Activated B cell treated with CpG ODN at 0.5 μM for 24 hours (primary cell): ENCODE measurements at regions of chr12 and their contacts with region 1.

Region 1: DNA sequence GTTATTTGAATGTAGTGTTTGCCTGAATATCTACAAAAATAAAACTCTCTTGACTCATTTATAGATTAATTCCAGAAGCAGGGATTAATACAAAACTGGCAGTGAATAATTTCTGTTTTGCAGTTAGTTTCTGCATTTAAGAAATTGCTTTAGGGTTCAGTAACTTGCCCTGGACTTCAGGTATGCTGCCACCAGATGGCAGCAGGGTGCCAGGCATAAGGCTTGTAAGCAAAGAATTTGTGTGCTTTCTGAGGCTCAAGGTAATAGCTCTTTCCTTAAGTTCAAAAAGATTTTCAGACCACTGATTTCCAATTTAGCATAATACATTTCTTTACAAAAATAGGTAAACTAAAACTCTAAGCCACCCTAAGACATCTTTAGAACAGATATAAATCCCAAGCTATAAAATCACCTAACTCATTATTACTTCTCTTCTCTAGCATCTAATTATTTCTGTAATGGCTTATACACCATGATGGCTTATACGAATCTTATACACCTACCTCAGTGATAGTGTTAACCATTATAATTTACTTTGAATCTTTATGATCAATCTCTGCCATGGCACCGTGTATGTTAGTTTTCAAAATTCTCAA is 398.3 kb downstream of the APAF1 start:
- DNase-seq: no peak
- ATAC-seq: no peak
- H3K4me3 Mint-ChIP-seq: no peak overlapping the region
- H3K27ac Mint-ChIP-seq: no peak overlapping the region
- H3K4me1 Mint-ChIP-seq: no peaks in the 10 kb centered on the region
- H3K27me3 Mint-ChIP-seq: peaks cover 3% of the 10 kb centered on the region
- CTCF ChIP-seq: peak; percentile 59

Region 2: GRCh38 chr12:98999559-98999958 is 43.9 kb before region 1 on chr12:
- CTCF ChIA-PET with region 1: no interaction called
- POLR2A ChIA-PET with region 1: no interaction called
- intact Hi-C with region 1: no loop called
- DNase-seq: no peak
- ATAC-seq: no peak
- H3K4me3 Mint-ChIP-seq: no peak overlapping the region
- H3K27ac Mint-ChIP-seq: no peak overlapping the region
- H3K4me1 Mint-ChIP-seq: no peaks in the 10 kb centered on the region
- H3K27me3 Mint-ChIP-seq: no peaks in the 10 kb centered on the region
- CTCF ChIP-seq: no peak

Region 3: GRCh38 chr12:99658671-99659349 is 615.4 kb after region 1 on chr12:
- CTCF ChIA-PET with region 1: interaction called, 5 read pairs
- POLR2A ChIA-PET with region 1: no interaction called
- intact Hi-C with region 1: loop called (anchors 5 kb)
- DNase-seq: no peak
- ATAC-seq: no peak
- H3K4me3 Mint-ChIP-seq: no peak overlapping the region
- H3K27ac Mint-ChIP-seq: no peak overlapping the region
- H3K4me1 Mint-ChIP-seq: no peaks in the 10 kb centered on the region
- H3K27me3 Mint-ChIP-seq: no peaks in the 10 kb centered on the region
- CTCF ChIP-seq: no peak